ENCODE measurements at regions of chr3 and their contacts with region 1.

Region 1: GRCh38 chr3:120742198-120742849 is at the starts of genes GTF2E1 and RABL3:
- DNase-seq: peak; percentile 98
- ATAC-seq: peak; percentile 96
- H3K4me3 ChIP-seq: peak within 1 kb of the TSS; percentile 78 to 98 (median 94)
- H3K4me3 Mint-ChIP-seq: peak within 1 kb of the TSS; percentile 95
- H3K27ac ChIP-seq: peak within 1 kb of the TSS; percentile 99 to 100
- H3K27ac Mint-ChIP-seq: peak within 1 kb of the TSS; percentile 96
- H3K4me1 ChIP-seq: peaks cover 12 to 15% of the 10 kb centered on the region in 2 donors
- H3K4me1 Mint-ChIP-seq: peaks cover 29% of the 10 kb centered on the region
- H3K27me3 ChIP-seq: no peaks in the 10 kb centered on the region
- H3K27me3 Mint-ChIP-seq: no peaks in the 10 kb centered on the region
- CTCF ChIP-seq: no peak
- total RNA-seq, gene GTF2E1: 23.0 and 24.7 TPM in 2 replicates
- total RNA-seq, gene RABL3: 18.8 and 19.5 TPM in 2 replicates

Region 2: DNA sequence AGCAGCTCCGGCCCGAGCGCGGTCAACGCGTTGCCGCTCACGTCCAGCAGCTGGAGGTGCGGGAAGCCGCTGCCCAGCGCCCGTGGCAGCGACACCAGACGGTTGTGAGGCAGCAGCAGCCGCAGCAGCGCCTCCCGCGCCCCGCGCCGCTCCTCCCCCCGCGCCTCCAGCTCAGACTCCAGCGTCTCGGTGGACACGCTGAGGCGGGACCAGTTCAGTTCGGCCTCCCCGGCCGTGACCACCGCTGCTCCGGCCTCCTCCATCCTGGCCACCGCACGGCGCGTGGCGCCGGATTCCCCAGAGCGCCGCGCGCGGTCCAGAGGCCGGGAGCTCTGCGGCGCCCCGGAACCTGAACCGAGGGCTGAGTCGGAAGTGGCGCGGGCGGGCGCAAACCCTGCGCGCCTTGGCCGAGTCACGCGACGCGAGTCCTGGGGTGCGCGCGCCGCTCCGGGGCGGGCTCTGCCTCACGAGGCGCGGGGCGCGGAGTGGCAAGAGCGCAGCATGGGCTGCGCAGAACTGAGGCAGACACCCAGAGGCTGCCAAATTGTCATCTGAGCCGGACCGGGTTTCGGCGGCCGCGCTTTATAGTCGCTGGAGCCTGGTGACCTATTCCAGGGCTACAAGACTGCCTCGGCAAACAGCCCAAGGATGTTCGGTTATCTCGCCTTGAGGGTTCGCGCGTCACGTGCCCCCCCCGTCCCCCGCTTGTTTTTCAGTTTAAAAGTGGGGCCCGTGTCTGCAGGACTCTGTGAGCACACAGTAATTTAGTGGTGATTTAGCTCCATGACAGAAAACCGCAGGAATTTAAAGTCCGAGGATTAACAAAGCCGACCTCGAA is 393.1 kb before region 1 on chr3 and contains the start of gene LRRC58:
- CTCF ChIA-PET with region 1: no interaction called
- POLR2A ChIA-PET with region 1: no interaction called
- intact Hi-C with region 1: loop called (anchors 2 kb)
- DNase-seq: peak; percentile 95
- ATAC-seq: peak; percentile 89
- H3K4me3 ChIP-seq: peak within 1 kb of the TSS; percentile 61 to 99 (median 88)
- H3K4me3 Mint-ChIP-seq: peak within 1 kb of the TSS; percentile 95
- H3K27ac ChIP-seq: peak within 1 kb of the TSS; percentile 63 to 85
- H3K27ac Mint-ChIP-seq: peak within 1 kb of the TSS; percentile 94
- H3K4me1 ChIP-seq: peaks cover 14 to 17% of the 10 kb centered on the region in 2 donors
- H3K4me1 Mint-ChIP-seq: peaks cover 41% of the 10 kb centered on the region
- H3K27me3 ChIP-seq: peaks cover 0 to 10% (median 0%) of the 10 kb centered on the region in 4 experiments
- H3K27me3 Mint-ChIP-seq: no peaks in the 10 kb centered on the region
- CTCF ChIP-seq: peak; percentile 25
- total RNA-seq, gene LRRC58: 16.7 TPM in 2 replicates

Region 3: GRCh38 chr3:120596116-120596852 is 146.0 kb before region 1 on chr3 and contains the start of gene NDUFB4:
- CTCF ChIA-PET with region 1: no interaction called
- POLR2A ChIA-PET with region 1: interaction called, 4 read pairs
- intact Hi-C with region 1: loop called (anchors 1 kb)
- DNase-seq: peak; percentile 97
- ATAC-seq: peak; percentile 97
- H3K4me3 ChIP-seq: peak within 1 kb of the TSS; percentile 59 to 94 (median 86)
- H3K4me3 Mint-ChIP-seq: peak within 1 kb of the TSS; percentile 92
- H3K27ac ChIP-seq: peak within 1 kb of the TSS; percentile 72 to 95
- H3K27ac Mint-ChIP-seq: peak within 1 kb of the TSS; percentile 96
- H3K4me1 ChIP-seq: peaks cover 15 to 19% of the 10 kb centered on the region in 2 donors
- H3K4me1 Mint-ChIP-seq: peaks cover 11% of the 10 kb centered on the region
- H3K27me3 ChIP-seq: no peaks in the 10 kb centered on the region
- H3K27me3 Mint-ChIP-seq: no peaks in the 10 kb centered on the region
- CTCF ChIP-seq: no peak
- total RNA-seq, gene NDUFB4: 58.1 and 68.4 TPM in 2 replicates

Region 4: DNA sequence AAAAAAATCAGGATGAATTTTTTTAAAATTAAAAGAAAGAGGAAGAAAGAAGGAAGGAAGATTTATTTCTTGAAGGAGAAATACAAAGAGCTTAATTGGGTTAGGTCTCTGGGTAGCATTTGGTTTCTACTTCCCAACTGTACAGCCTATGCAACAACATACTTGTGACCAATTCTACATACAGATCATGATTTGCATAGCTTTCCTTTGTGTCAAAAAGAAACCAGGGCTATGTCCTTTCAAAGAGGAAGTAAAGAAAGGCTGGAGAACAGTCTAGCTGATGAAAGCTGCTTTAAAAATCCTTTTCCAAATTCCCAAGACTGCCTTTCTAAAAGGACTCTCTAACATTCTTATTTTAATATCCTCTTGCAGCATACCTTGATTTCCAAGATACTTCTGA is 54.2 kb before region 1 on chr3:
- CTCF ChIA-PET with region 1: no interaction called
- POLR2A ChIA-PET with region 1: no interaction called
- intact Hi-C with region 1: loop called (anchors 2 kb)
- DNase-seq: peak; percentile 51
- ATAC-seq: peak; percentile 67
- H3K4me3 ChIP-seq: no peak overlapping the region
- H3K4me3 Mint-ChIP-seq: no peak overlapping the region
- H3K27ac ChIP-seq: peak overlapping the region in 1 of 2 donors; percentile 3
- H3K27ac Mint-ChIP-seq: no peak overlapping the region
- H3K4me1 ChIP-seq: peaks cover 8 to 12% of the 10 kb centered on the region in 2 donors
- H3K4me1 Mint-ChIP-seq: peaks cover 20% of the 10 kb centered on the region
- H3K27me3 ChIP-seq: no peaks in the 10 kb centered on the region
- H3K27me3 Mint-ChIP-seq: no peaks in the 10 kb centered on the region
- CTCF ChIP-seq: no peak

Region 5: DNA sequence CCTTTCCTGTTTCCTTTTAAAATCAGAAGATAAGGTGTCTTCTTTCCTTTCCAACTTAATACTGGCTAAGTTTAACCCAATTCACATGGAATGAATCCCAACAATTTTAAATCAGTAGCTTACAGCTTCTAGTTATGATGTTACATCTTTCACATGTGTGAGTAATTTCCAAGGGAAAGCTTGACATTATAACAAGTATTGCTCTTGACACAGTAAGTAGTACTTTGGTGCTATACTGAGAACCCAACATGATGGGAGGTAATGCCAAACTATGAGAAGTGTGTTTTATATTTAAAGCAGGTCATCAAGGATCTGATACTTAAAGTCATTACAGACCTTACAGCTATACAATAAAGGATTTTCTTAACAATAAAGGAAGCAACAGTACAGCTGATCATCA is 29.1 kb before region 1 on chr3:
- CTCF ChIA-PET with region 1: no interaction called
- POLR2A ChIA-PET with region 1: no interaction called
- intact Hi-C with region 1: loop called (anchors 2 kb)
- DNase-seq: no peak
- ATAC-seq: no peak
- H3K4me3 ChIP-seq: no peak overlapping the region
- H3K4me3 Mint-ChIP-seq: no peak overlapping the region
- H3K27ac ChIP-seq: no peak overlapping the region
- H3K27ac Mint-ChIP-seq: no peak overlapping the region
- H3K4me1 ChIP-seq: peaks cover 2 to 10% of the 10 kb centered on the region in 2 donors
- H3K4me1 Mint-ChIP-seq: peaks cover 10% of the 10 kb centered on the region
- H3K27me3 ChIP-seq: no peaks in the 10 kb centered on the region
- H3K27me3 Mint-ChIP-seq: no peaks in the 10 kb centered on the region
- CTCF ChIP-seq: no peak

Measured in B cell (primary cell).